ENCODE measurements at regions of chr5 and their contacts with region 1.

Region 1: GRCh38 chr5:146218168-146218567 is 14.8 kb downstream of the RBM27 start:
- DNase-seq: no peak
- H3K4me3 ChIP-seq: no peak overlapping the region
- H3K27ac ChIP-seq: no peak overlapping the region
- H3K4me1 ChIP-seq: no peaks in the 10 kb centered on the region
- H3K27me3 ChIP-seq: no peaks in the 10 kb centered on the region
- CTCF ChIP-seq: no peak

Region 2: GRCh38 chr5:146179696-146180095 is 38.5 kb before region 1 on chr5:
- CTCF ChIA-PET with region 1: no interaction called
- dilution Hi-C with region 1: no loop called
- in situ Hi-C with region 1: no loop called
- intact Hi-C with region 1: loop called (anchors 5 kb)
- DNase-seq: no peak
- H3K4me3 ChIP-seq: no peak overlapping the region
- H3K27ac ChIP-seq: no peak overlapping the region
- H3K4me1 ChIP-seq: no peaks in the 10 kb centered on the region
- H3K27me3 ChIP-seq: no peaks in the 10 kb centered on the region
- CTCF ChIP-seq: no peak

Region 3: GRCh38 chr5:146203011-146203871 is 14.9 kb before region 1 on chr5 and contains the start of gene RBM27:
- CTCF ChIA-PET with region 1: no interaction called
- dilution Hi-C with region 1: no loop called
- in situ Hi-C with region 1: no loop called
- intact Hi-C with region 1: no loop called
- DNase-seq: peak; percentile 97
- H3K4me3 ChIP-seq: peak within 1 kb of the TSS; percentile 91 to 97 (median 95)
- H3K27ac ChIP-seq: peak within 1 kb of the TSS; percentile 73
- H3K4me1 ChIP-seq: peaks cover 7% of the 10 kb centered on the region
- H3K27me3 ChIP-seq: no peaks in the 10 kb centered on the region
- CTCF ChIP-seq: no peak
- total RNA-seq, gene RBM27: 18.4 to 25.5 TPM

Measured in mammary epithelial cell (primary cell).